Mammary epithelial cell (primary cell): ENCODE measurements at regions of chr1 and their contacts with region 1.

Region 1: DNA sequence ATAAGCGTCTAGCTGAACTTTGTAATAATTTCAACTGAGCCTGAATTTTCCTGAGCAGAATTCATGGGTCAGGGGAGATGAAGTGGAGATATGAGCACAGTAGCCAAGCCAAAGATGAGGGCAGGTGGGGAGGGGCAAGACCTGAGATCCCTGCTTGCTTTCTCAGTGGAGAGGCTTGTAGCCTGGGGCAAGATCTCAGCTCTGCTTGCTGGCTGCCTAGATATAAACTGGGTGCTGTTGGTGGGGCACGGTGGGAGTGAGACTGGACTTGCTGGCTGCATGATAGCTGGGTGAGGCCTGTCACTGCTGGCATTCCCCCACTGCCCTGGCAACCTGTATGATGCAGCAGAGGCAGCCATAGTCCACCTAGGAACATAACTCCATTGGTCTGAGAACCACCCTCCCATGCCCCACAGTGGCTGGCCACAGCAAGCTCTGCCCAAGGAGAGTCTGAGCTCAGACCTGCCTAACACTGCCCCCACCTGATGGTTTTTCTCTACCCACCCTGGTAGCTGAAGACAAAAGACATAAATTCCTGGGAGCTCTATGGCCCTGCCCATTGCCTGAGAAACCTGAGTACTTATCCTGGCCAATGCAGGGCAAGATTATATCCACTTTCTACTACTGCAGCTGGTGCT is 261.8 kb upstream of the DEPDC1 start:
- DNase-seq: peak; percentile 1
- H3K4me3 ChIP-seq: no peak overlapping the region
- H3K27ac ChIP-seq: no peak overlapping the region
- H3K4me1 ChIP-seq: no peaks in the 10 kb centered on the region
- H3K27me3 ChIP-seq: no peaks in the 10 kb centered on the region
- CTCF ChIP-seq: peak in 1 of 2 donors; percentile 6

Region 2: GRCh38 chr1:68442822-68443556 is 315.7 kb before region 1 on chr1:
- CTCF ChIA-PET with region 1: no interaction called
- dilution Hi-C with region 1: no loop called
- in situ Hi-C with region 1: no loop called
- intact Hi-C with region 1: no loop called
- DNase-seq: peak; percentile 81
- H3K4me3 ChIP-seq: no peak overlapping the region
- H3K27ac ChIP-seq: no peak overlapping the region
- H3K4me1 ChIP-seq: peaks cover 8% of the 10 kb centered on the region
- H3K27me3 ChIP-seq: no peaks in the 10 kb centered on the region
- CTCF ChIP-seq: peak; percentile 73 to 76

Region 3: DNA sequence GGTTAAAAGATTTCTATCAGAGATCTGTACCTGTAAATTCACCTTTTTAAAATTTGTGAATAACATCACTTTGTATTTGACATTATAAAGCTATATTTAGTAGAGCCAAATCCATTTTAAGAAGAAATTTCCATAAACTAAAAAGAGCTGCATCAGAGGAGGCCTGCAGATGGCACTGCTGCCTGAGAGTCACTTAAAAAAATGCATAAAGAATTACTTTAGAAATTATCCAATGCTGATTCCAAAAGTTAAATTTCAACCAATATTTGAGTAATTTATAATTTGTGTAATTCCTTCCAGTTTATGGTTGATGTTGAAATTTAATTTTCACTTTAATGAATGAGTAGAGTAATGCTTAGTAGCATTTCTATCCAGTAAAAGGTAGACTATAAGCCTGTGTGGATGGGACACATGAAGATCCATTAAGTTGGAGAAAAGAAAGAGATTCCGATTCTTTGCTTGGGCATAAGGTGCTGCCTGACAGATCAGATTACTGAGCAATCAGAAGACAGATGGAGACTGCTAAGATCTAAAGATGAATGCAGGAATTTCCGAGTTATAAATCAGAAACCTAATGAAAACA is 288.2 kb before region 1 on chr1:
- CTCF ChIA-PET with region 1: no interaction called
- dilution Hi-C with region 1: no loop called
- in situ Hi-C with region 1: no loop called
- intact Hi-C with region 1: loop called (anchors 2 kb)
- DNase-seq: no peak
- H3K4me3 ChIP-seq: no peak overlapping the region
- H3K27ac ChIP-seq: no peak overlapping the region
- H3K4me1 ChIP-seq: no peaks in the 10 kb centered on the region
- H3K27me3 ChIP-seq: no peaks in the 10 kb centered on the region
- CTCF ChIP-seq: peak; percentile 68 to 73

Region 4: DNA sequence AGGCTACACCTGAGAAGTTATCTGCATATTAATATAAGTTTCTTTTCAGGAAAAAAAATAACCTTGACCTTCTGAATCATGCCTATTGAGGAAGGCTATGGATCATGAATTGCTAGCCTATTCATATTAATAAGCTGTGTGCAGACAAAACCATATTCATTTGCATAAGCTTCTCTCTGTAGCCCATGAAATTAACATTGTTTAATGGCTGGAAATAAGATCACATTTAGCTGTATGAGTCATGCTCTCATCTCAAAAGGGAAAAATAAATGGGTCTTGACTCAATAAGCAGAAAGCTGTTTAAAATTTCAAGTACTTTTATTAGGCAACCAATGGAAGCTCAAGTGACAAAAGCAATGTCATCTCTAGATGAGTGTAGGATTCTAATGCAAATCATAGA is 68.1 kb after region 1 on chr1:
- CTCF ChIA-PET with region 1: no interaction called
- dilution Hi-C with region 1: no loop called
- in situ Hi-C with region 1: no loop called
- intact Hi-C with region 1: no loop called
- DNase-seq: no peak
- H3K4me3 ChIP-seq: no peak overlapping the region
- H3K27ac ChIP-seq: no peak overlapping the region
- H3K4me1 ChIP-seq: no peaks in the 10 kb centered on the region
- H3K27me3 ChIP-seq: peaks cover 2% of the 10 kb centered on the region
- CTCF ChIP-seq: no peak

Region 5: GRCh38 chr1:69163241-69163640 is 404.6 kb after region 1 on chr1:
- CTCF ChIA-PET with region 1: no interaction called
- dilution Hi-C with region 1: no loop called
- in situ Hi-C with region 1: no loop called
- intact Hi-C with region 1: no loop called
- DNase-seq: no peak
- H3K4me3 ChIP-seq: no peak overlapping the region
- H3K27ac ChIP-seq: no peak overlapping the region
- H3K4me1 ChIP-seq: no peaks in the 10 kb centered on the region
- H3K27me3 ChIP-seq: no peaks in the 10 kb centered on the region
- CTCF ChIP-seq: no peak